PC-9 (cell line): ENCODE measurements at regions of chr1 and their contacts with region 1.

Region 1: GRCh38 chr1:150629115-150629928 is at the start of gene ENSA:
- DNase-seq: peak; percentile 95 to 97
- H3K4me3 ChIP-seq: peak within 1 kb of the TSS; percentile 96
- H3K27ac ChIP-seq: peak within 1 kb of the TSS; percentile 76
- H3K4me1 ChIP-seq: peaks cover 49% of the 10 kb centered on the region
- H3K27me3 ChIP-seq: no peaks in the 10 kb centered on the region
- CTCF ChIP-seq: no peak
- total RNA-seq, gene ENSA: 229 and 263 TPM in 2 replicates

Region 2: GRCh38 chr1:150281837-150282653 is 347.3 kb before region 1 on chr1 and contains the start of gene CIART:
- CTCF ChIA-PET with region 1: no interaction called
- POLR2A ChIA-PET with region 1: no interaction called
- intact Hi-C with region 1: loop called (anchors 10 kb)
- DNase-seq: peak; percentile 91 to 92
- H3K4me3 ChIP-seq: peak within 1 kb of the TSS; percentile 52
- H3K27ac ChIP-seq: peak within 1 kb of the TSS; percentile 51
- H3K4me1 ChIP-seq: peaks cover 14% of the 10 kb centered on the region; the same call in 1 of the 2 replicates
- H3K27me3 ChIP-seq: no peaks in the 10 kb centered on the region
- CTCF ChIP-seq: no peak
- total RNA-seq, gene CIART: 11.0 and 16.6 TPM in 2 replicates

Region 3: DNA sequence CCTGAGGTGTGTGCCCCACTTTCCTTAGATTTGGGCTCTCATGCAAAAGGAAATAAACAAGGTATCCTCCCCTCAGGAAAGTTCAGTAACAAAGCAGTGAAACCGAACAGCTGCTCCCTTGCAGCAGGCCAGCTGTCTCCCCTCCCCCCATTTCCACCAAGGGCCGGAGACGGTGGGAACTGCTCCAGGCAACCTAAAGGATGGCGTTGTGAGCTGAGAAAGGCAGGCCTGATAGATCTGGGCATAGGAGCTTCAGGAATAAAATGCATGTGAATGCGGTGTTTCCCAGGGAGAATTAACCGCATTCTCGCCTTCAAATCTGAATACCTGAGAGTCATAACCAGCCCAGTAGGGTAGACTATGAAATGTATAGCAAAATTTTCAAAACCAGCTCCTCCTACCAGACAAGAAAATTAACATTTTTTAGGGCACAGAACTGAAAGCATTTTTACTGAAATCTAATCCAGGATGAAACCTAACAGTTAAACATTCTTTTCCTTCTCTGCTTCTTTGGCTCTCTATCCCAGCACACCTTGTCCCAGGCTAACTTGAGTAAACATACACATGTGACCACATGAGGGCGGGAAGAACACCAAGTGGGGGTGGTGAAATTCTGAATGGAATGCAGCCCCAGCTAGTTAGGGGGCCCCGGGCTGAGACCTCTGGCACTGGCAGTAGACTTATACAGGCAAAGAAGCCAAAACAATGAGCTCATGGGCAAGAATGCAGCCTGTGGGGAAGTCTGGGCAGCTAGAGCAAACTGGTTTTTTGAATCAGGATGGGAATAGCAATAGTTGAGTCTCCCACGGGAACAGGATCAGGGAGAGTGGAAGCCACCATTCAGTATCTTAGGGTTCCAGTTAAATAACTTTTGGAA is 61.4 kb before region 1 on chr1:
- CTCF ChIA-PET with region 1: no interaction called
- POLR2A ChIA-PET with region 1: interaction called, 11 read pairs
- intact Hi-C with region 1: no loop called
- DNase-seq: peak; percentile 94 to 98
- H3K4me3 ChIP-seq: peak overlapping the region; percentile 15; the same call in 1 of the 2 replicates
- H3K27ac ChIP-seq: peak overlapping the region; percentile 93
- H3K4me1 ChIP-seq: peaks cover 84% of the 10 kb centered on the region
- H3K27me3 ChIP-seq: no peaks in the 10 kb centered on the region
- CTCF ChIP-seq: no peak

Region 4: DNA sequence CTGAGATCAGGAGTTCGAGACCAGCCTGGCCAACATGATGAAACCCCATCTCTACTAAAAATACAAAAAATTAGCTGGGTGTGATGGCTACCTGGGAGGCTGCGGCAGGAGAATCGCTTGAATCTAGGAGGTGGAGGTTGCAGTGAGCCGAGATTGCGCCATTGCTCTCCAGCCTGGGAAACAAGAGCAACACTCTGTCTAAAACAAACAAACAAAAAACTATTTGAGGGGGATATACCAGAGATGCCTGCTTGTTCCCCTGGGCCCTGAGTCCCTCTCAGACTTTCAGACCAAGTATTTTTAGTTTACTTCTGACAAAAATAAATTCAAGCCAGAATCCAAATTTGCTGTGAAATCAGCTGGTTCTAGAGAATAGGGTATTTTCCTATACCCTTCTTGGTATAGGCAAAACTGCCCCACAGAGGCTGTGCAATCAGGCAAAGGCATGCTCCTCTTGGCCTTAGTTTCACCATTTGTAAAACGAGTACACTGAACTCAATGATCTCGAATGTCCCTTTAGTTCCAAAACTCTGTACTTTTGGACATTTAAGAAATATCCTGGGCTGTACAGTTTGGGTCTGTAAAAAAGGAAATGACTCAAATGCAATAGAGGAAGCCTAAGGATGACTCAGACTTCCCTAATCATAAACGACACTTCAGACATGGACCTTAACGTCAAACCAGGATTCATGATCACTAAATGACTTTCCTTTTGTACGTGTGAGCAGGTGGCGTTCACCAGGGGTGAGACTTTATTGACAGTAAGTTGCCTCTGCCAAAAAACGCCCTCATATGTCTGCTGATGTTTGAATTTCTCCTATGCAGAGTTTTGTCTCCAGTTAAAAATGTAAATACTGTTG is 16.0 kb before region 1 on chr1:
- CTCF ChIA-PET with region 1: no interaction called
- POLR2A ChIA-PET with region 1: interaction called, 19 read pairs
- intact Hi-C with region 1: loop called (anchors 1 kb)
- DNase-seq: peak in 1 of 2 experiments; percentile 86
- H3K4me3 ChIP-seq: no peak overlapping the region
- H3K27ac ChIP-seq: peak overlapping the region; percentile 97
- H3K4me1 ChIP-seq: peaks cover 52% of the 10 kb centered on the region
- H3K27me3 ChIP-seq: no peaks in the 10 kb centered on the region
- CTCF ChIP-seq: no peak

Region 5: GRCh38 chr1:150650199-150650598 is 20.9 kb after region 1 on chr1:
- CTCF ChIA-PET with region 1: no interaction called
- POLR2A ChIA-PET with region 1: interaction called, 9 read pairs
- intact Hi-C with region 1: loop called (anchors 1 kb)
- DNase-seq: peak; percentile 67 to 94
- H3K4me3 ChIP-seq: no peak overlapping the region
- H3K27ac ChIP-seq: peak overlapping the region; percentile 65; the same call in 1 of the 2 replicates
- H3K4me1 ChIP-seq: peaks cover 20% of the 10 kb centered on the region
- H3K27me3 ChIP-seq: no peaks in the 10 kb centered on the region
- CTCF ChIP-seq: no peak

Region 6: GRCh38 chr1:151175910-151176309 is 546.6 kb after region 1 on chr1 and contains the start of gene TMOD4:
- CTCF ChIA-PET with region 1: no interaction called
- POLR2A ChIA-PET with region 1: interaction called, 12 read pairs
- intact Hi-C with region 1: no loop called
- DNase-seq: no peak
- H3K4me3 ChIP-seq: no peak within 1 kb of the TSS
- H3K27ac ChIP-seq: no peak within 1 kb of the TSS
- H3K4me1 ChIP-seq: no peaks in the 10 kb centered on the region
- H3K27me3 ChIP-seq: no peaks in the 10 kb centered on the region
- CTCF ChIP-seq: peak; percentile 64
- total RNA-seq, gene TMOD4: 1.2 TPM in 1 of 2 replicates, not detected in the other